Activated CD4-positive, alpha-beta T cell treated with anti-CD3 and anti-CD28 coated beads, Interleukin-2, amount 10 ng/mL, durations not matched to agents 24 days and 14 days (primary cell): ENCODE measurements at regions of chr1 and their contacts with region 1.

Region 1: GRCh38 chr1:163174524-163175437 is 27.9 kb downstream of the RGS5 start:
- DNase-seq: peak; percentile 78
- H3K4me3 Mint-ChIP-seq: no peak overlapping the region
- H3K27ac Mint-ChIP-seq: no peak overlapping the region
- H3K4me1 Mint-ChIP-seq: no peaks in the 10 kb centered on the region
- H3K27me3 Mint-ChIP-seq: peaks cover 4% of the 10 kb centered on the region

Region 2: GRCh38 chr1:162847839-162848453 is 326.8 kb before region 1 on chr1:
- intact Hi-C with region 1: loop called (anchors 5 kb)
- DNase-seq: peak; percentile 91
- H3K4me3 Mint-ChIP-seq: no peak overlapping the region
- H3K27ac Mint-ChIP-seq: no peak overlapping the region
- H3K4me1 Mint-ChIP-seq: no peaks in the 10 kb centered on the region
- H3K27me3 Mint-ChIP-seq: peaks cover 16% of the 10 kb centered on the region

Region 3: DNA sequence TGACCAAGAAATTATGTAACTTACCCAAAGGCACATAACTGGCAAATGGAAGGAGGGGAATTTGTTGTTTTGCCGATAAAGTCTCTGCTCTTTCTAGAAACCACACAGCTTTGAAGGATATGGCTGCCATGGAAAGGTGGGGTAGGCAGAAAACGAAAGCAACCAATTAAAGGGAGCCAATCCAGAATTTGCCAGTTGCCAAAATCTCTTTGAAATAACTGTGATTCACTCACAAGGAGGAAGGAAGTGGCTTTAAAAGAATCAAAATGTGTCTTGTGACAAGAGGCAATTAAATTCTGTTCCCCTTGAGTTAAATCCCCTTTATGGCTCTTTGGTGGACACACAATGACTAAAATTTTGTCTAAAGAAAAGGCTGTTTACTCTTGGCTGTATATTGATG is 252.6 kb before region 1 on chr1:
- intact Hi-C with region 1: no loop called
- DNase-seq: no peak
- H3K4me3 Mint-ChIP-seq: no peak overlapping the region
- H3K27ac Mint-ChIP-seq: no peak overlapping the region
- H3K4me1 Mint-ChIP-seq: peaks cover 2% of the 10 kb centered on the region
- H3K27me3 Mint-ChIP-seq: peaks cover 8% of the 10 kb centered on the region

Region 4: DNA sequence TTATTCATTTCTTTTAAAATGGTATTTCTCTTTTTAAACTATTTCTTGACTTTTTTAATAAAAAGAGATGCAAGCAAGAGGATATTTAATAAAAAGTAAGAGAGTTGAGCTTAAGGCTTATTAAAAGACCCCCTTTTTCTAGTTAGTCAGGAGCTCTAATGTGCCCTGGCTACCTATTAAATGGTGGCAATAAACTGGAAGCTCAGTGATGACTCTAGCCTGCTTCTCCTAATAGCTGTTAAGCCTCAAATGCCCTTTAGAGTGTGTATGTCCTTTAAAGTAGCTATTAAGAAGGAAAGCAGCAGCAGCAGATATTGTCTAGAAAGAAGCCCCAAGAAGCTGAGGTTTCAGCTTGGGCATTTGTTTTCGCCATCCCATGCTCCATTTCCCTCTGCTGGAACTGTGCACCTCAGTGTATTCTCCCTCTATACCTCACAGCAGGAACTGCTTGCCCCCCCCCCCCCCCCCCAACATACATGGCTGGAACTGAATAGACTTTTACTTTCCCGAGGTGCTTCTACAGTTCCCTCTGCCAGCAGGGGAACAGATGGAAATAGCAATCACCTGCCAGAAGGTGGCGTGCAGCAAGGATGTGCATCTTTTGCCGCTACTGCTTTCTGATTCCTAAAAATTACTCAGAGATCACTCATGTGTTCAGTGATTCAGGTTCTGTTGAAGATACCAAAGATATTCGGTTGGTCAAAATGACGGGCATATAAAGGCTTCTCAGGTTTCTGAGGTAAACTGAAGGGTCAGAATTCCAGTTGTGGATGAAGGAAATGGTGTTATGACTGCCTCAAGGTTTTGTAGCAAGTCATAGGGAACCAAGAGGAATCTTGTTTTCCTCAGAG is 103.2 kb before region 1 on chr1:
- intact Hi-C with region 1: loop called (anchors 5 kb)
- DNase-seq: peak; percentile 83
- H3K4me3 Mint-ChIP-seq: no peak overlapping the region
- H3K27ac Mint-ChIP-seq: no peak overlapping the region
- H3K4me1 Mint-ChIP-seq: no peaks in the 10 kb centered on the region
- H3K27me3 Mint-ChIP-seq: peaks cover 36% of the 10 kb centered on the region

Region 5: GRCh38 chr1:163137556-163138265 is 37.1 kb before region 1 on chr1:
- intact Hi-C with region 1: no loop called
- DNase-seq: no peak
- H3K4me3 Mint-ChIP-seq: no peak overlapping the region
- H3K27ac Mint-ChIP-seq: no peak overlapping the region
- H3K4me1 Mint-ChIP-seq: no peaks in the 10 kb centered on the region
- H3K27me3 Mint-ChIP-seq: peaks cover 6% of the 10 kb centered on the region